Left ventricle myocardium superior (tissue), 1 donor: ENCODE measurements at regions of chr16 and their contacts with region 1.

Region 1: GRCh38 chr16:46973207-46973995 is at the start of gene DNAJA2:
- DNase-seq: peak; percentile 96
- ATAC-seq: peak; percentile 98
- total RNA-seq, gene DNAJA2: 97.2 TPM

Region 2: DNA sequence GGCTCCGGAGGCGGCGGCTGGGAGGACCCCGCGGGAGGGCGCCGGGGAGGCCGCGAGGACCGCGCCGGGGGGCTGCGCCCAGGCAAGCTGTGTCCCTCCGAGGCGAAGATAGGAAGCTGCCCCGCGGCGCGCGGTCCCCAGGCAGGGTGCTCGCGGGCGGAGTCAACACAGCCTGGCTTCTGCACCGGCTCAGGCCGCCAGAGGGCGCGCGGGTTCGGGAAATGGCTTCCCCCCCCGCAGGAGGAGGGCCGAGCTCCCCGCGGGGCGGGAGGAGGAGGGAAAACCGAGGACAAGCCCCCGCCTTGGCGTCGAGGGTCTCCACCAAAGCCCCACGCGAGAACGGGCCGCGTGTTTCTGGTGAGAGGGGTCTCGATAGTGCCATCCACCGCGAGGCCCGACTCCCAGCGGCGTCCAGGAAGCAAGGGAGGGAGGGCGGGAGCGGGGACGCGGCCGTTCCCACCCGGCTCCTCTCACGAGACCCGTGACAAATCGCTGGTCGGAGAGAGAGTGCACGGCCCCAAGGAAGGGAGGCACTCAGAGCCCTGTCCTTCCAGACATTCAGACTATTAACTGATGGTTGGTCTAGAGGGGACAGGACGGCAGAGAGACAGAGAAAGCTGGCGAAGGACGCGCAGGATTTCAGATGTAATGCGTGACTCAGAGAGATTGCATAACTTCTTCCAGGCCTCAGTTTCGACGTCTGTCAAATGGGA is 64.5 kb after region 1 on chr16:
- intact Hi-C with region 1: loop called (anchors 5 kb)
- DNase-seq: peak; percentile 96
- ATAC-seq: peak; percentile 99

Region 3: DNA sequence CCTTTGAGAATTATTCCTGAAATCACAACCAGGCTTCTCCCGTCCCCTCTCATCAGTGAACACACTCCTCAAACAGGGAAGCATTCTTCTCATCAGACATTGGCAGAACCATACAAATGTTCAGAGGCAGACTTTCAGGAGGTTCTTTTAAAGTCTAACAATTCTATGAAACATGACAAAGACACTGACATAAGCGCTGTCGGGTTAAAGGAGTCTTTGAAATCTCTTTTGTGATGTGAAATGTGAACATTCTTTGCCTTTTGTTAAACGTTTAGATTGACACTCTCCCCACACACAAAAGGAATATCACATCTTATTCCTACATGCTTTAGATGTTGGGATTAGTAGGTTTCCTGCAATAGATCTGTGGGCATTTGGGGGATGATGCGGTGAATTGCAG is 106.5 kb after region 1 on chr16:
- intact Hi-C with region 1: no loop called
- DNase-seq: no peak
- ATAC-seq: no peak

Region 4: DNA sequence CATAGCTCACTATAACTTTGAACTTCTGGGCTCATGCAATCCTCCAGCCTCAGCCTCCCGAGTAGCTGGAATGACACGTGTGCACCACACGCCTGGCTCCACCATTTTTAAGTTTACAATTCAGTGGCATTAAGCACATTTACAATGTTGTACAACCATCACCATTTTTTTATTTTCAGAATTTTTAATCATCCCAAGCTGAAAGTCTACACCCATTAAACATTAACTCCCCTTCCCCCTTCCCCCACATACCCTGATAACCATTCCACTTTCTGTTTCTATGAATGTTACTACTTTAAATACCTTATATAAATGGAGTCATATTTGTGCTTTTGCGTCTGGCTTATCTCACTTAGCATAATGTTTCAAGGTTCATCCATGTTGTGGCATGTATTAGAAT is 152.4 kb after region 1 on chr16:
- intact Hi-C with region 1: no loop called
- DNase-seq: no peak
- ATAC-seq: no peak